ENCODE measurements at regions of chr5 and their contacts with region 1.

Region 1: GRCh38 chr5:139808493-139809139 is 13.0 kb downstream of the PSD2 start:
- DNase-seq: peak; percentile 24
- ATAC-seq: peak; percentile 97
- H3K4me3 ChIP-seq: no peak overlapping the region
- H3K27ac ChIP-seq: no peak overlapping the region
- H3K4me1 ChIP-seq: no peaks in the 10 kb centered on the region
- H3K27me3 ChIP-seq: peaks cover 39% of the 10 kb centered on the region
- CTCF ChIP-seq: no peak
- POLR2A ChIP-seq: no peak
- RAD21 ChIP-seq: no peak

Region 2: GRCh38 chr5:139543423-139543991 is 265.1 kb before region 1 on chr5:
- CTCF ChIA-PET with region 1: no interaction called
- POLR2A ChIA-PET with region 1: no interaction called
- dilution Hi-C with region 1: no loop called
- in situ Hi-C with region 1: no loop called
- intact Hi-C with region 1: no loop called
- DNase-seq: peak; percentile 5
- ATAC-seq: peak; percentile 78
- H3K4me3 ChIP-seq: no peak overlapping the region
- H3K27ac ChIP-seq: no peak overlapping the region
- H3K4me1 ChIP-seq: no peaks in the 10 kb centered on the region
- H3K27me3 ChIP-seq: no peaks in the 10 kb centered on the region
- CTCF ChIP-seq: no peak
- POLR2A ChIP-seq: no peak
- RAD21 ChIP-seq: no peak

Region 3: GRCh38 chr5:139844472-139845145 is 36.0 kb after region 1 on chr5:
- CTCF ChIA-PET with region 1: no interaction called
- POLR2A ChIA-PET with region 1: no interaction called
- dilution Hi-C with region 1: no loop called
- in situ Hi-C with region 1: no loop called
- intact Hi-C with region 1: loop called (anchors 5 kb)
- DNase-seq: peak; percentile 64
- ATAC-seq: peak; percentile 84
- H3K4me3 ChIP-seq: no peak overlapping the region
- H3K27ac ChIP-seq: no peak overlapping the region
- H3K4me1 ChIP-seq: no peaks in the 10 kb centered on the region
- H3K27me3 ChIP-seq: peaks cover 53% of the 10 kb centered on the region
- CTCF ChIP-seq: peak; percentile 69
- POLR2A ChIP-seq: no peak
- RAD21 ChIP-seq: peak; percentile 66